Right ventricle myocardium superior (tissue), 1 donor: ENCODE measurements at regions of chr11 and their contacts with region 1.

Region 1: DNA sequence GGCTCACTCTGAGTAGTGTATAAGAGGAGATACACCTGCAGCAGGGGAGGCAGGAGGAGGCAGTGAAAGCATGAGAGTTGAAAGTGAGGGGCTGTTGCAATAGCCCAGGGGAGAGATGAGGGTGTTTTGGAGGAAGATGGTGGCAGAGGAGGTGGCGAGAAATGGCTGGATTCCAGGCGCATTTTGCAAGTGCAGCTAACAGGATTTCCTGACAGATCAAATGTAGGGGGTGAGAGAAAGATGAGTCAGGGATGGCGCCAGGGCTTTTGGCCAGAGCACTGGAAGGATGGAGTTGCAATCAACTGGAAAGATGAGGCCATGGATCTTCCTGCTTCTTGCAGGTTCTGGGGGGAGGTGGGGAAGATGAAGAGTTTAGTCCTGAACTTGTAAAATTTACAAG is 16.8 kb upstream of the TSPAN18 start:
- DNase-seq: no peak
- ATAC-seq: no peak

Region 2: GRCh38 chr11:44651535-44652155 is 58.3 kb before region 1 on chr11:
- intact Hi-C with region 1: loop called (anchors 5 kb)
- DNase-seq: no peak
- ATAC-seq: no peak